Thyroid gland (tissue), 4 donors: ENCODE measurements at regions of chrX and their contacts with region 1.

Region 1: GRCh38 chrX:15497865-15498264 is 2.7 kb upstream of the BMX start:
- DNase-seq: peak; percentile 51 to 63
- H3K4me3 ChIP-seq: no peak overlapping the region
- H3K27ac ChIP-seq: no peak overlapping the region
- H3K4me1 ChIP-seq: no peaks in the 10 kb centered on the region
- H3K27me3 ChIP-seq: no peaks in the 10 kb centered on the region
- CTCF ChIP-seq: peak in 5 of 6 experiments; percentile 15 to 59 (median 50)
- POLR2A ChIP-seq: no peak

Region 2: GRCh38 chrX:15560924-15561323 is 63.1 kb after region 1 on chrX:
- intact Hi-C with region 1: loop called (anchors 2 kb)
- DNase-seq: no peak
- H3K4me3 ChIP-seq: no peak overlapping the region
- H3K27ac ChIP-seq: no peak overlapping the region
- H3K4me1 ChIP-seq: no peaks in the 10 kb centered on the region
- H3K27me3 ChIP-seq: no peaks in the 10 kb centered on the region
- CTCF ChIP-seq: no peak
- POLR2A ChIP-seq: no peak

Region 3: DNA sequence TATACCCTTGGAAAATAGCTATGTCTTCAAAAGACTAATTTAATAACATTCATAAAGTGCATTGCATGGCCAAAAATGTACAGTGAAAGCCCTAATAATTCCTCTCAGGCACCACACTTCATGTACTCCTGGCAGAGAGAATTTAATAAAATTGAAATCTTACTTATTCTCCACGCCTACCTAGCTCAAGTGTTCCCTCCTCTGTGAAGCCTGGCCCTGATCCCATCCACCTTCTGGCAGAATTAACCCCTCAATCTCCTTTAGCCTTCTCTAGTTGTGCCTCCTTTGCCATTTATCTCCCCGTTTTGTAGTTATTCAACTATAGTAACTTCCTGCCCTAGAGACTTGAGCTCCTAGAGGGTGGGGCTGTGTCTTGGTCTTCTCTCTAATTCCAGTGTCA is 76.2 kb after region 1 on chrX:
- intact Hi-C with region 1: no loop called
- DNase-seq: peak; percentile 53 to 54
- H3K4me3 ChIP-seq: no peak overlapping the region
- H3K27ac ChIP-seq: peak overlapping the region in 1 of 3 donors; percentile 32
- H3K4me1 ChIP-seq: peaks cover 2 to 5% of the 10 kb centered on the region in 2 donors
- H3K27me3 ChIP-seq: no peaks in the 10 kb centered on the region
- CTCF ChIP-seq: no peak
- POLR2A ChIP-seq: no peak